Activated naive CD4-positive, alpha-beta T cell treated with anti-CD3 and anti-CD28 coated beads for 36 hours (primary cell): ENCODE measurements at regions of chr15 and their contacts with region 1.

Region 1: DNA sequence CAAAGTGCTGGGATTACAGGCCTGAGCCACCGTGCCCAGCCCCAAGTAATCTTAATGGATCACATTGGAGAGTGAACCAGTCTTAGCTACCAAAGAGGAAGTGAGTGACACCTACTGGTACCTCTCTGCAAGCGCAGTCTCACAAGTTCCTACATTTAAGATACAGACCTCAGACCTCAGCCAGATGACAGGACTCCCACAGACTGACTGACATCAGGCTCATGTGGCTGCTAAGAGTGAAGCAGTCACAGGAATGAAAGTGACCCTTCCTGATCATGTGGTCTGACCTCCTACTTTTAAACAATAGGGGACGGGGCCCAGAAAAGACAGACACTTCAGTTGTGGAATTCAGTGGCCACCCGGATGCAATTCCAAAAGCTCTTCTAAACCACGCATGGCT is 36.3 kb upstream of the GNB5 start:
- DNase-seq: peak; percentile 85
- H3K4me3 Mint-ChIP-seq: no peak overlapping the region
- H3K27ac Mint-ChIP-seq: no peak overlapping the region
- H3K4me1 Mint-ChIP-seq: peaks cover 17% of the 10 kb centered on the region
- H3K27me3 Mint-ChIP-seq: no peaks in the 10 kb centered on the region

Region 2: DNA sequence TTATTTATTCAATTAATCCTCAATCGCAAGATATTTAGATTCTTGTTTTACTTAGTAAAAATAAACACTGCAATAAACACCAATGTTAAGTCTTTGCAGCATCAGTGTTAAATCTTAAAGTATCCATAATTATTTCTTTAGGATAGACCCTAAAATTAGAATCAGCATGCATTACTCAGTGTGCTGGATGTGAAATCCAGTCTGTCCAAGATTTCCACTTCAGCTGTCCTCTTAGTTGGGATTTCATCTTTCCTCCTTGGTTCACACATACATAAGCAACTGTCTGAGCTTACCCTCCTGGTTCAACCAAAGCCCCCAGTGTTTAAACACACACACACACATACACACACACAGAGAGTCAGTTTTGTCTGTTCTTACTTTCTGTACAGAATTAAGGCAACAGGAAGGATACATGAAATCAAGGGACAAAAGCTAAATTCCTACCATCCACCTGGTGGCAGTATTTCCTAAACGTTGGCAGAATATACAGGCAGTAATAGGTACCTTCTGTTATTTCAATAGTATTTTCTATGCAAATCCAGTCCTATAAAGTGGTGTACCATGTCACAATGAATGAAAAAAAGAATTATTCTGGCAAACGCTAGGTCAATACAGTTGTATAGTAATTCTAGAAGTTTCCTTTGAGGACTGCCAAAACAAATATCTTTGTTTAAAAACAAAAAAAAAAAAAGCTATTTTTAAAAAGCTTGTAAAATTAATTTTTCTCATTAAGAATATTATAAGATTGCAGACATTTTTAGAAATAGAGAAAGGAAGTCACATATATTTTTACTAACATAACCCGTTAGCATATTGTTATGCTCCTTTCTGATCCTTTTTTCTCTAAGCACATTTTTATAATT is 577.6 kb before region 1 on chr15:
- CTCF ChIA-PET with region 1: interaction called, 4 read pairs
- intact Hi-C with region 1: loop called (anchors 10 kb)
- DNase-seq: peak; percentile 60
- H3K4me3 Mint-ChIP-seq: no peak overlapping the region
- H3K27ac Mint-ChIP-seq: no peak overlapping the region
- H3K4me1 Mint-ChIP-seq: no peaks in the 10 kb centered on the region
- H3K27me3 Mint-ChIP-seq: no peaks in the 10 kb centered on the region

Region 3: GRCh38 chr15:51982013-51982769 is 245.3 kb before region 1 on chr15:
- CTCF ChIA-PET with region 1: interaction called, 7 read pairs
- intact Hi-C with region 1: loop called (anchors 1 kb)
- DNase-seq: peak; percentile 52
- H3K4me3 Mint-ChIP-seq: peak overlapping the region; percentile 62
- H3K27ac Mint-ChIP-seq: peak overlapping the region; percentile 25
- H3K4me1 Mint-ChIP-seq: peaks cover 10% of the 10 kb centered on the region
- H3K27me3 Mint-ChIP-seq: no peaks in the 10 kb centered on the region

Region 4: DNA sequence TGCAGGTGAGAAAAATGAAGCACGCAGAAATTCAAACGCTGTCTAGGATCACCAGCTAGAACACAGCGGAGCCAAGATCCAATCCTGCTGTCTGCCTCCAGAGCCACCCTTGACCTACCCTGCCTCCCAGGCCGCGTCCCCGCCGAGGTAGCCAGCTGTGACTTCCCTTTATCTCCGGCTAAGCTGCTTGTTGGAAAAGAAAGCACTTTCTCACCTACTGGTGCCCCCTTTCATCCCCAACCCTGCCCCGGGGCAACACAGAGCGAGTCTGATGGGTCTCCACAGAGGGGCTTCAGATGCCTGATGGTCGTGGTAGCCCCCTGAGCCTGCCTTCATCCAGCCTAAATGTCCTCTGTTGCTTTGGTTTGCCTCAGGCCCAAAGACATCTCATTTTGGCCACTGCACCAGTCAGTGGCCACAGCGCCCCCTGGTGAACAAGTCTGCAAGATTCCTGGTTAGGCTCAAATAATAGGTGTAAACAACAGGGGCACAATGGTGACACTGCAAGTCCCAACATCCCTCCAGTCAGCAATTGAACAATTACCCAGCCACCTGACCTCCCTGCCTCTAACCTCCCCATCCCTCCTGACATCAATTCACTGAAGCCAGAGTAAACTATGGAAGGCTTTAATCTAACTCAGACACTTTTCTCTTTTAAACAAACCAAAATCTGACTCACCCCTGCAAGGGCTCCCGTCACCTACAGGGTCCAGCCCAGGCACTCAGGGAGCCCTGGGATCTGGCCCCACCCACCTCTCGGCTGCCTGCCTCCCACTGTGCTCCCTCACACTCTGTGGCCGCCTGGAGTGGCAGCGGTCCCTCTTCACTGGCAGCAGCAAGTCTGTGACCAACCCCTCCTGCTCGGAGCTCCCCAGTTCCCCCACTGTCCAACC is 87.6 kb before region 1 on chr15:
- CTCF ChIA-PET with region 1: interaction called, 7 read pairs
- intact Hi-C with region 1: loop called (anchors 1 kb)
- DNase-seq: peak; percentile 82
- H3K4me3 Mint-ChIP-seq: no peak overlapping the region
- H3K27ac Mint-ChIP-seq: no peak overlapping the region
- H3K4me1 Mint-ChIP-seq: peaks cover 18% of the 10 kb centered on the region
- H3K27me3 Mint-ChIP-seq: no peaks in the 10 kb centered on the region

Region 5: DNA sequence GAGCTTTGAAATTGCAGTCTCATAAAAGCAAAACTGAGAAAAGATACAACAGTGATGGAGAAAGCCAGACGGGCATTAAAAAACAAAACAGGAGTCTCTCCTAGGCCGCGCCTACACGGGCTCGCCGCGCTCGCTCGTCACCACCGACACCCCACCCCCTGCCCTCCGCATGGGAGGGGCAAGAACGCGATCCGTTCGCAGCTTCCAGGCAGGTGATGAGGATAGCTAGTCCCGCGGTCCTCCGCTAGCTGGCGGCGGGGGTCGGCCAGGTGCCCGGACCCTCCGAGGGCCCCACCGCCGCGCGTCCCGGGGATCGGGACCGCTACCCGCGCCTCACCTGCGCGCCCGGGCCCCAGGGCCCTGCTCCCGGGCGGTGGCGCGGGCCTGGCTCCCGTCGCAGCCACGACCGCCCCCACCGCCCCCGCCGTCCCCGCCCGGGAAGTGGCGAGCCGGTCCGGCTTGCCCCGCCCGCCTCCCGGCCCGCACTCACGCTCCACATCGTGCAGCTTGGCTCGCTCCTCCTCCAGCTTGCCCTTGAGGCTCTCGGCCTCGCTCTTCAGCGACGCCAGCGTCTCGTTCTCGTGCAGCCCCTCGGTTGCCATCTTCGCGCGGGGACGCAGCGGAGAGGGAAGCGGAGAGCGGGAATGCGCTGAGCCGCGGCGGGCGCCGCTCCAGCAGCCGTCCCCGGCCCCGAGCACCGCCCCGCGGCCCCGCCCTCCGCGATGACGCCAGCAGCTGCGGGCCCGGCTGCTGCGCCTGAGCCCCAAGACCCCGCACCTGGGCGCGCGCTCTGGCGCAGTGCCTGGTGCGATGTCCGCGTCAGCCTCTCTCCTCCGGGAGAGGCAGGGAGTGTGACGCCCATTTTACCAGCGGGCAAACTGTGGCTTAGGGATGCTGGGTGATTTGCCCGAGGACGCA is 47.9 kb before region 1 on chr15:
- CTCF ChIA-PET with region 1: interaction called, 25 read pairs
- intact Hi-C with region 1: loop called (anchors 1 kb)
- DNase-seq: peak; percentile 91
- H3K4me3 Mint-ChIP-seq: peak overlapping the region; percentile 87
- H3K27ac Mint-ChIP-seq: peak overlapping the region; percentile 92
- H3K4me1 Mint-ChIP-seq: peaks cover 19% of the 10 kb centered on the region
- H3K27me3 Mint-ChIP-seq: no peaks in the 10 kb centered on the region

Region 6: DNA sequence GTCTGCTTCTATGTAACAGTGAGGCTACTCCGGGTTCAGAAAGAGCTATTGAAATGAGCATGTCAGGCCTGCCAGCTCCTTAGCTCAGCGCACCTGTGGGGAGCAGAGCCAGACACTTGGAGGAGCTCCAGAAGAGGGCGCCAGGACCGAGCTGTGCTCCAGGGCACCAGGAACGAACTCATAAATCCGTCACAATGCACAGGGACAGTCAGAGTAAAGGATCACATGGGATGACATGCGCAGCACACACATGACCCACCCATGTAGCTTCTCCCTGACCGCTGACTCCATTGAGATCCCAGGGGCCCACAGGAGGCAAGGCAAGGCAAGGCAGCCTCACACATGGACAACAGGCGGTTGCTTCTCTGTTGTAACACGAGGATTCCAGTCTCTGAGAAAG is 10.3 kb before region 1 on chr15:
- CTCF ChIA-PET with region 1: interaction called, 18 read pairs
- intact Hi-C with region 1: no loop called
- DNase-seq: peak; percentile 45
- H3K4me3 Mint-ChIP-seq: no peak overlapping the region
- H3K27ac Mint-ChIP-seq: no peak overlapping the region
- H3K4me1 Mint-ChIP-seq: peaks cover 14% of the 10 kb centered on the region
- H3K27me3 Mint-ChIP-seq: no peaks in the 10 kb centered on the region

Region 7: GRCh38 chr15:52256366-52256765 is 28.9 kb after region 1 on chr15:
- CTCF ChIA-PET with region 1: interaction called, 7 read pairs
- intact Hi-C with region 1: loop called (anchors 2 kb)
- DNase-seq: peak; percentile 87
- H3K4me3 Mint-ChIP-seq: peak overlapping the region; percentile 52
- H3K27ac Mint-ChIP-seq: no peak overlapping the region
- H3K4me1 Mint-ChIP-seq: peaks cover 18% of the 10 kb centered on the region
- H3K27me3 Mint-ChIP-seq: no peaks in the 10 kb centered on the region

Region 8: GRCh38 chr15:52528991-52529926 is 301.8 kb after region 1 on chr15:
- CTCF ChIA-PET with region 1: no interaction called
- intact Hi-C with region 1: no loop called
- DNase-seq: peak; percentile 81
- H3K4me3 Mint-ChIP-seq: peak overlapping the region; percentile 74
- H3K27ac Mint-ChIP-seq: peak overlapping the region; percentile 47
- H3K4me1 Mint-ChIP-seq: peaks cover 13% of the 10 kb centered on the region
- H3K27me3 Mint-ChIP-seq: no peaks in the 10 kb centered on the region